Right lobe of liver (tissue), 6 donors: ENCODE measurements at regions of chr4 and their contacts with region 1.

Region 1: GRCh38 chr4:891747-892146 is 40.4 kb downstream of the GAK start:
- DNase-seq: no peak
- ATAC-seq: peak in 2 of 4 donors; percentile 10 to 14
- H3K4me3 ChIP-seq: no peak overlapping the region
- H3K27ac ChIP-seq: no peak overlapping the region
- H3K4me1 ChIP-seq: no peaks in the 10 kb centered on the region
- H3K27me3 ChIP-seq: no peaks in the 10 kb centered on the region
- CTCF ChIP-seq: peak in 2 of 4 donors; percentile 7 to 28
- POLR2A ChIP-seq: no peak

Region 2: GRCh38 chr4:337143-337931 is 554.4 kb before region 1 on chr4 and contains the start of gene ZNF141:
- intact Hi-C with region 1: no loop called
- DNase-seq: peak; percentile 95 to 97 (median 97)
- ATAC-seq: peak; percentile 96 to 98 (median 97)
- H3K4me3 ChIP-seq: peak within 1 kb of the TSS; percentile 83 to 97 (median 95)
- H3K27ac ChIP-seq: peak within 1 kb of the TSS; percentile 81 to 88 (median 85)
- H3K4me1 ChIP-seq: peaks cover 0 to 7% (median 0%) of the 10 kb centered on the region in 4 donors
- H3K27me3 ChIP-seq: no peaks in the 10 kb centered on the region
- CTCF ChIP-seq: no peak
- POLR2A ChIP-seq: peak; percentile 82
- total RNA-seq, gene ZNF141: 6.7 to 8.9 (median 7.6) TPM

Region 3: GRCh38 chr4:948051-948935 is 56.5 kb after region 1 on chr4:
- intact Hi-C with region 1: no loop called
- DNase-seq: no peak
- ATAC-seq: no peak
- H3K4me3 ChIP-seq: no peak overlapping the region
- H3K27ac ChIP-seq: no peak overlapping the region
- H3K4me1 ChIP-seq: no peaks in the 10 kb centered on the region
- H3K27me3 ChIP-seq: no peaks in the 10 kb centered on the region
- CTCF ChIP-seq: no peak
- POLR2A ChIP-seq: no peak

Region 4: DNA sequence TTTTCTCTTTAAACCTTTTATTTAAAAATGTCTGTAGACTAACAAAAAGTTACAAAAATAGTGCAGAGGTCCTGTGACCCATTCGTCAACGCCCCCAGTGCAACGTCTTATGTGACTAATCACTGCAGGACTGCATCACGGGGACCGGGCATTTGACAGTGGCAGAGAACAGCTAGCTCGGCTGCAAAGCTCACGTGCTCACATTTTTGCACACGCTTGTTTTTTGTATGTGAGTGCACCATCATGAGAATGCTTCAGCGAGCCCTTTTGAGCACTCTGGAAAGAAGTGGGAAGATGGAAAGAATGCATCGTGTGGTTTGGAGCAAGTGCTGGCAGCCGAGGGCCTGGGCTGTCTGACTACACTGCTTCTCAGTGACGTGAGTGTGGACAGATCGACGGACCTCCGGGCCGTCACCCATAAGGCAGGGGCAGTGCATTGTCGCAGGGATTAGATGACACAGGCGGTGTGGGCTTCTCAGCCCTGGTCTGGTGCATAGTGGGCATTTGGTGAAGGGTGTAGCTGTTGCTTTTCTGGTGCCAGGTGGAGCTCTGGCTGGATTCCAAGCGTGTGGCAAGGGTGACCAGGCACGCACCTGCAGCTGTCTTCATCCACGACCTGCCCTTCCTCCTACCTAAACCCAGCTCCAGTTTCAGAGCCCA is 262.9 kb after region 1 on chr4:
- intact Hi-C with region 1: loop called in 1 of 2 experiments (anchors 5 kb)
- DNase-seq: no peak
- ATAC-seq: peak in 1 of 4 donors; percentile 18
- H3K4me3 ChIP-seq: no peak overlapping the region
- H3K27ac ChIP-seq: no peak overlapping the region
- H3K4me1 ChIP-seq: no peaks in the 10 kb centered on the region
- H3K27me3 ChIP-seq: no peaks in the 10 kb centered on the region
- CTCF ChIP-seq: no peak
- POLR2A ChIP-seq: no peak